Activated naive CD4-positive, alpha-beta T cell treated with anti-CD3 and anti-CD28 coated beads, Interleukin-2, amount 10 ng/mL, durations not matched to agents 7 days and 5 days (primary cell): ENCODE measurements at regions of chr6 and their contacts with region 1.

Region 1: DNA sequence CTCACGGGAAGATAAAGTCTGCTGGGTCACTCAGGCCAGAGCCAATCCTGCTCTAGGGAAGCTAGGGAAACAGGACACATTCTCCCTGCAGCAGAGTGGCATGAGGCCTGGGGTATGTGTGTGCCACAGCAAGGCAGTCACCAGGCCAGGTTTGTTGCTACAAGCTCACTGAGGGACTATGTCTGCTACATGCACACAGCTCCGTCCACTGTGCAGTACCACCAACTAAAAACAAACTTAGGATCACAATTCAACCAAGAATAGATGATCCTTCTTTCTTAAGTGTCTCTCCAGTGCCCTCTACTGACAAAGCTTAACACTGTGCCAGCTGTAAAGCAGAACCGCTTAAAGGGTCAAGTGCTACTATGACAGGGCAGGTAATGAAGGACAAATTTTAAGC is 192.5 kb downstream of the PTPRK start:
- DNase-seq: peak; percentile 50
- H3K4me3 Mint-ChIP-seq: no peak overlapping the region
- H3K27ac Mint-ChIP-seq: no peak overlapping the region
- H3K4me1 Mint-ChIP-seq: no peaks in the 10 kb centered on the region
- H3K27me3 Mint-ChIP-seq: no peaks in the 10 kb centered on the region

Region 2: DNA sequence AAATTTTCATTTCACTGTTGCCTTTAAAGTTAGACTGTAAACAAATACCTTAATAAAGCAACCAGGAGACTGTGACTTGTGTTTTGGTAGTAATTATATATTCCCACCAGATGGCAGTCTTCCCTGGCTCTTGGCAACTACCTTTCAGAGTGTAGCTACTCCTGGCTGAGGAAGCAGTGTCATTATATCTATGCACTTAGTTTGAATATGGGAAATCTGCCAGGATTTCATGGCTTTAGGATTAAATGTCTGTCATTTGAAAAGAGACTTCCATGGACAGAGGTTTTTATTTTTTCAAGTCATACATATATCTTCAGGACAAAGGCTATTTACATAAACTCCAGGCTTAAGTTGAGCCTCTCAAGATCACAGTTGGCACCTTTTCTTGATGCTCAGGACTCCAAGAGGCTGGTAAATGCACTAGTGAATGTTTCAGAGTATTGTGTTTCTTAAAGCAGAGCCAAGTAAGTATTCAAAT is 590.8 kb before region 1 on chr6:
- CTCF ChIA-PET with region 1: interaction called, 25 read pairs
- DNase-seq: peak; percentile 48
- H3K4me3 Mint-ChIP-seq: no peak overlapping the region
- H3K27ac Mint-ChIP-seq: peak overlapping the region; percentile 34
- H3K4me1 Mint-ChIP-seq: peaks cover 10% of the 10 kb centered on the region
- H3K27me3 Mint-ChIP-seq: no peaks in the 10 kb centered on the region

Region 3: DNA sequence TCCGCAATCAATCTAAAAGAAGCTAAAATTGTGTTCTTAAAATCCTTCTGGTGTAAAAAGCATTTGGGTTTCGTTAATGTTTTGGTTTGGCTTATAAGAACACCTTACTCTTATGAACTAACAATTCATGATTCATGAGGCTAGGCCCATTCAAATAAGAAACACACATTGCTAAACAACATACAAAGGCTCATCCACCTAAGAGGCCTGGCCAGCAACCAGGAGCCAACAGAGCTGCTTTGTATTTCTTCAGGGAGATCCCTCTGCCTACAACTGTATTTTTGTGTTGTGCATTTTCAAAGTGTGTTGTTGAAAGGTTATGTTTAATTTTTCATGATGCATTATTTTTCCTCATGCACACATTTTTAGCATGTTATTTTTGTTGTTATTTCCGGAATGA is 93.9 kb after region 1 on chr6:
- CTCF ChIA-PET with region 1: no interaction called
- DNase-seq: no peak
- H3K4me3 Mint-ChIP-seq: no peak overlapping the region
- H3K27ac Mint-ChIP-seq: no peak overlapping the region
- H3K4me1 Mint-ChIP-seq: no peaks in the 10 kb centered on the region
- H3K27me3 Mint-ChIP-seq: no peaks in the 10 kb centered on the region